CD8-positive, alpha-beta T cell (primary cell): ENCODE measurements at regions of chr17 and their contacts with region 1.

Region 1: DNA sequence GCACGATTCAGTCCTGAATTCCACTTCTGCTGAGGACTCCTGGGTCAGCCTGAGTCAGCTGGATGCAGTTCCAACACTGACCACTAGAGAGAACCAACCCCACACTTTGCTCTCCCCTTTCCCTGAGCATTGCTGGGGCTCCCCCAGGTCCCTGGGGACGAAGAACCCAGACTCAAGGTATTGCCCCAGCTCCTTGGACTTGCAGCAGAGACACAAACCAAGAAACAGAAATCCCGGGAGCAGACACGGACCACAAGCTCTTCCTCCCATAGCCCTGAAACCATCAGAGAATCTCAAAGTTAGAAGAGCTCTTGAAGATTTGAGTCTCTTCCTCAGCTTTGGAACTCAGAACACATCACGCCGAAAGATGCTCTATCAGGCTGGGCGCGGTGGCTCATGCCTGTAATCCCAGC is 678 bp upstream of the GH1 start:
- DNase-seq: peak; percentile 53 to 88 (median 72)
- ATAC-seq: peak; percentile 100
- H3K4me3 ChIP-seq: no peak overlapping the region
- H3K4me3 Mint-ChIP-seq: no peak overlapping the region
- H3K27ac ChIP-seq: no peak overlapping the region
- H3K27ac Mint-ChIP-seq: no peak overlapping the region
- H3K4me1 ChIP-seq: no peaks in the 10 kb centered on the region
- H3K4me1 Mint-ChIP-seq: peaks cover 8% of the 10 kb centered on the region
- H3K27me3 ChIP-seq: no peaks in the 10 kb centered on the region
- H3K27me3 Mint-ChIP-seq: no peaks in the 10 kb centered on the region
- CTCF ChIP-seq: peak; percentile 91

Region 2: DNA sequence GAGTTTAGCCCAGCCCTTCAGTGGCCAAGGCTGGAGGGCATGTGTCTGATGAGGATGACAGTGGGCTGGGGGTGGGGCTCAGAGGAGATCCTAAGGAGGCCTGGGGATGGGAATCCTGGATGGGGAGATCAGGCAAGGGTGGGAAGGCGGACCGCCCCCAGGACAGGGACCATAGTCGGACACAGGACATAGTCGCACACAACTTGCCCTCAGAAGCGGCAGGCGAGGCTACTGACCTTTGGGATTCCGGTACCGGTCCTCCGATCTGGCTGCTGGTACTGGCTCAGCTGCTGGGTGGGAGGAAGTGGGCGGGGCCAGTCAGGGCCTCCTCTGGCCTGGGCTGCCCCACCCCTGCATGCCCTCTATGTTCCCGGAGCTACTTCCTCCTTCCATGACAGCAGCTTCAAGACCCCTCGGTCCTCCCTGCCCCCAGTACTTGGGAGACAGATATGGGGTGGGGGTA is 11.8 kb after region 1 on chr17:
- CTCF ChIA-PET with region 1: interaction called, 56 read pairs
- POLR2A ChIA-PET with region 1: interaction called, 6 read pairs
- intact Hi-C with region 1: no loop called
- DNase-seq: peak in 8 of 9 experiments; percentile 53 to 79 (median 66)
- ATAC-seq: peak; percentile 81
- H3K4me3 ChIP-seq: peak overlapping the region; percentile 48 to 58
- H3K4me3 Mint-ChIP-seq: peak overlapping the region; percentile 93
- H3K27ac ChIP-seq: peak overlapping the region; percentile 36 to 50
- H3K27ac Mint-ChIP-seq: peak overlapping the region; percentile 94
- H3K4me1 ChIP-seq: peaks cover 20% of the 10 kb centered on the region
- H3K4me1 Mint-ChIP-seq: peaks cover 27% of the 10 kb centered on the region
- H3K27me3 ChIP-seq: no peaks in the 10 kb centered on the region
- H3K27me3 Mint-ChIP-seq: no peaks in the 10 kb centered on the region
- CTCF ChIP-seq: no peak

Region 3: DNA sequence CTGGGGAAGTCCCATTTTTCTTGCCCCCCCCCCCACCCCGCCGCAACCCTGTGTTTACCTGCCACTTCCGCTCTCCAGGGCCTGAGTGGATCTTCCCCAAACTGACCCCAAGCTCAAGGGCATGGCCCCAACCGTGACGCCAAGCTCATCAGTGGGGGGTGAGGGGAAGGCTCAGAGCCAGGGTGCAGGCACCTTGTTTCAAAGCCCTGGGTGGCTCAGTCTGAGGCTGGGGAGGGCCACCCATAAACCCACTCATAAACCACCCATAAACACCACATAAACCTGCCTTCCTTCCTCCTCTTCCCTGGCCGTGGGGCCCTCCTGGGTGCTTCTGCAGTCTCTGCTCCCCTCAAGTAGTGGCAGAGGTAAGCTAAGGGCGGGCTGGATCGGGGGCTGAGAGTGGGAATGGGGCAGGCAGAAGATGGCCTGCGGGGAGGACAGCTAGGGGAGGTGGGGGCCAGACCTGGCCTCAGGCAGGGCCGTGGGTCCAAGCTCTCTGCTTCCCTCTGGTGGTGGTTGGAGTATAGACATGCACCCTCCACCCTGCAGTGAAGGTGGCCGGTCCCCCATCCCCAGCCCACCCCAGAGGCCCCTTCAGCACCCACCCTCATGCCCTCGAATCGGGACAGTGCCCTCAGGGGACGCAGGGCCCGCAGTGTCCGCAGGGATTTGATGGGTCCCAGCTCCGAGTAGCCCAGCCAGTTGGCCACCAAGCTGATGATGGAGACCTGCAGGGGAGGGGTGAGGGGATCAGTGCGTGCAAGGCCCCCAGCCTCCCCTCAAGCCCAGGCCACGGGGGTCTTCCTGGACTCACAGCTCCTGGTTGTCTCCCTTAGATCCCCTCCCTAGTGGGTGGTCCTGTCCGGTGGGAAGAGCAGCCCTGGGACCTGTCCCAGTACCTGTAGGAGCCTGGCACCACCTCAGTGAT is 27.4 kb after region 1 on chr17:
- CTCF ChIA-PET with region 1: interaction called, 87 read pairs
- POLR2A ChIA-PET with region 1: interaction called, 7 read pairs
- intact Hi-C with region 1: loop called (anchors 1 kb)
- DNase-seq: peak; percentile 22 to 77 (median 60)
- ATAC-seq: peak; percentile 78
- H3K4me3 ChIP-seq: peak overlapping the region; percentile 29 to 47
- H3K4me3 Mint-ChIP-seq: peak overlapping the region; percentile 74
- H3K27ac ChIP-seq: peak overlapping the region in 1 of 2 experiments; percentile 43
- H3K27ac Mint-ChIP-seq: peak overlapping the region; percentile 72
- H3K4me1 ChIP-seq: peaks cover 20% of the 10 kb centered on the region
- H3K4me1 Mint-ChIP-seq: peaks cover 20% of the 10 kb centered on the region
- H3K27me3 ChIP-seq: no peaks in the 10 kb centered on the region
- H3K27me3 Mint-ChIP-seq: no peaks in the 10 kb centered on the region
- CTCF ChIP-seq: peak; percentile 69

Region 4: GRCh38 chr17:63984651-63985386 is 65.5 kb after region 1 on chr17:
- CTCF ChIA-PET with region 1: interaction called, 67 read pairs
- POLR2A ChIA-PET with region 1: no interaction called
- intact Hi-C with region 1: loop called (anchors 1 kb)
- DNase-seq: peak in 7 of 9 experiments; percentile 29 to 85 (median 65)
- ATAC-seq: peak; percentile 94
- H3K4me3 ChIP-seq: no peak overlapping the region
- H3K4me3 Mint-ChIP-seq: no peak overlapping the region
- H3K27ac ChIP-seq: peak overlapping the region in 1 of 2 experiments; percentile 52
- H3K27ac Mint-ChIP-seq: peak overlapping the region; percentile 33
- H3K4me1 ChIP-seq: peaks cover 7% of the 10 kb centered on the region
- H3K4me1 Mint-ChIP-seq: peaks cover 21% of the 10 kb centered on the region
- H3K27me3 ChIP-seq: no peaks in the 10 kb centered on the region
- H3K27me3 Mint-ChIP-seq: no peaks in the 10 kb centered on the region
- CTCF ChIP-seq: no peak

Region 5: DNA sequence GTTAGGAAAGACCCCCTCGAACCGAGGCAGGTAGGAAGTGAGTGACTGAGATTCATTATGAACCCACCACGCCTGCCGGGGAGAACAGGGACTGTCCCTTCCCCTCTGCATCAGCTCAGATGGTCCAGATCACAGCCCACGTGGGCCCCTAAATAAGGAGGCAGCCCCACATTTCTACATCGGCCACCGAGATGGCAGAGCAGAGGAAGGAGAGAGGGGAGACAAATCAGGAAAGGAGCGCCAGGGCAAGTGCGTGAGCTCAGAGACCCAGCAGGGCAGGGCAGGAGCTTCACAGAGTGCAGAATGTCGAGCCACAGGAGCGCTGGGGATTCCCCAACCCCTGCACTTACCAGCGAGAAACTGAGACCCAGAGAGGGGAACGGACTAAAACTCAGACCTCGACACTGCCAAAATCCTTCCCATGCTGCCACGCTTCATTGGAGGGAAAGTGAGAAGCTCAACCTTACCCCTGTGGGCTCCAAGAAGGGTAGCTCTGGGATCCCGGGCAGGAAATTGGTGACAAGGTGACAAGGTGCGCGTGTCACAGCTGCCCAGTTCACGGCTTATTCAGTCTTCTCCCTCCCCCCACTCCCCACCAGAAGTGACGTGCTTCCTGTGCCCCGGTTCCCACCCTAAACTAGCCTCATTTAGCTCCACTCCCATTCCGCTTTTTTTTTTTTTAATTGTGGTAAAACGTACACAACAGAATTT is 100.9 kb after region 1 on chr17 and contains the start of gene ICAM2:
- CTCF ChIA-PET with region 1: interaction called, 262 read pairs
- POLR2A ChIA-PET with region 1: interaction called, 12 read pairs
- intact Hi-C with region 1: loop called (anchors 1 kb)
- DNase-seq: peak; percentile 83 to 99 (median 90)
- ATAC-seq: peak; percentile 73
- H3K4me3 ChIP-seq: peak within 1 kb of the TSS; percentile 78 to 87
- H3K4me3 Mint-ChIP-seq: peak within 1 kb of the TSS; percentile 99
- H3K27ac ChIP-seq: peak within 1 kb of the TSS; percentile 95 to 99
- H3K27ac Mint-ChIP-seq: peak within 1 kb of the TSS; percentile 100
- H3K4me1 ChIP-seq: peaks cover 72% of the 10 kb centered on the region
- H3K4me1 Mint-ChIP-seq: peaks cover 79% of the 10 kb centered on the region
- H3K27me3 ChIP-seq: no peaks in the 10 kb centered on the region
- H3K27me3 Mint-ChIP-seq: no peaks in the 10 kb centered on the region
- CTCF ChIP-seq: no peak
- total RNA-seq, gene ICAM2: 38.0 to 38.7 TPM

Region 6: GRCh38 chr17:64063766-64064224 is 144.5 kb after region 1 on chr17:
- CTCF ChIA-PET with region 1: interaction called, 10 read pairs
- POLR2A ChIA-PET with region 1: no interaction called
- intact Hi-C with region 1: no loop called
- DNase-seq: peak; percentile 20 to 73 (median 56)
- ATAC-seq: peak; percentile 54
- H3K4me3 ChIP-seq: no peak overlapping the region
- H3K4me3 Mint-ChIP-seq: peak overlapping the region; percentile 76
- H3K27ac ChIP-seq: peak overlapping the region in 1 of 2 experiments; percentile 58
- H3K27ac Mint-ChIP-seq: peak overlapping the region; percentile 86
- H3K4me1 ChIP-seq: peaks cover 32% of the 10 kb centered on the region
- H3K4me1 Mint-ChIP-seq: peaks cover 75% of the 10 kb centered on the region
- H3K27me3 ChIP-seq: no peaks in the 10 kb centered on the region
- H3K27me3 Mint-ChIP-seq: no peaks in the 10 kb centered on the region
- CTCF ChIP-seq: peak; percentile 33